Dendritic cell treated with granulocyte-macrophage colony-stimulating factor and Interleukin-4, amounts not matched to agents 40 ng/mL and 50 ng/mL, for 4 days (primary cell): ENCODE measurements at regions of chr20 and their contacts with region 1.

Region 1: GRCh38 chr20:8131598-8132483 is at the start of gene PLCB1:
- H3K4me3 Mint-ChIP-seq: peak within 1 kb of the TSS; percentile 79
- H3K27ac Mint-ChIP-seq: peak within 1 kb of the TSS; percentile 23
- H3K4me1 Mint-ChIP-seq: peaks cover 40% of the 10 kb centered on the region
- H3K27me3 Mint-ChIP-seq: peaks cover 20% of the 10 kb centered on the region

Region 2: DNA sequence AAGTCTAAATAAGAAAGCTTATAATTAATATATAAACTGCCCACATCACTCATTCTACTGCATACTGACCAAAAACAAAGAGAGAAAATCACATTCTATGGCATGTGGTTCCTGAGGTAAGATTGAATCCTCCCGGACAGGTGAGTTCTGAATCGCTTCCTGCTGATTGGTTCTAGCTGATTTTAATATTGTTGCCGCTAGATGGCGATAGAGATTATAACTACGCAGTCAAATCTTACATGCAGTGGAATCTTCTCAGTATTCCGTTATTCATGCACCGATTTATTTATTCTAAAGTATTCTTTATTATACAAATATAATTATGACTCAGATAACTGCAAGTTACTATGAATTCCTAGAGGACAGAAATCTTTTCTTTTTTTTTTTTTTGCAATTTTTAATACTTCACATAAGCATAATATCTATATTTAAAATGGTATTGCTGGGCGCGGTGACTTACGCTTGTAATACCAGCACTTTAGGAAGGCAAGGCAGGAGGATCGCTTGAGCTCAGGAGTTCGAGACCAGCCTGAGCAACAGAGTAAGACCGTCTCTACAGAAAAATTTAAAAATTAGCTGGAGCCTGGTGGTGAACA is 88.1 kb before region 1 on chr20:
- intact Hi-C with region 1: loop called (anchors 5 kb)
- H3K4me3 Mint-ChIP-seq: no peak overlapping the region
- H3K27ac Mint-ChIP-seq: no peak overlapping the region
- H3K4me1 Mint-ChIP-seq: no peaks in the 10 kb centered on the region
- H3K27me3 Mint-ChIP-seq: no peaks in the 10 kb centered on the region

Region 3: GRCh38 chr20:8161264-8162071 is 29.6 kb after region 1 on chr20:
- intact Hi-C with region 1: no loop called
- H3K4me3 Mint-ChIP-seq: no peak overlapping the region
- H3K27ac Mint-ChIP-seq: no peak overlapping the region
- H3K4me1 Mint-ChIP-seq: peaks cover 12% of the 10 kb centered on the region
- H3K27me3 Mint-ChIP-seq: no peaks in the 10 kb centered on the region

Region 4: DNA sequence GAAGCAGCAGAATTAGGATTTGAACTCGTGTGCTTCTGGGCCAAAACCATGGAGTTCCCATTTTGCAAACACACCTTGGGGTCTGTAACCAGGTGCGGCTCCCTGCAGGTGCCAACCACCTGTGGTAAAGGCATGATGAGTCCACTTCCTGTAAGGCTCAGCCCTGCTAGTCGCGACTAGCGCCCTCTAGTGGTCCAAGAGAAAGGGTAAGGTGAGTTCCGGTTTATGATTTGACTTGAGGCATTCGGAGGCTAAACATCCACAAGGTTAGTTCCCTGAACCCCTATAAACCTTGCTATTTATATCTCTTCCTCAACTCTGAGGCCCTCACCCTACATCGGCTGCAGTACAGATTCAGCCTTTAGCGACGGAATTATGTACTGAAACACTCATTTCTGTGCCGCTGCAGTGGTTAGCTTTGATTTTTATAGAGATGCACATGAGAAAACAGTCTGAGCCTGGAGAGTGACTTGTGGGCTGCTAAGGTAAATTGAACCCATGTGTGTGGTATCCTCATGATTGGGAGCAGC is 173.7 kb after region 1 on chr20:
- intact Hi-C with region 1: loop called (anchors 1 kb)
- H3K4me3 Mint-ChIP-seq: no peak overlapping the region
- H3K27ac Mint-ChIP-seq: no peak overlapping the region
- H3K4me1 Mint-ChIP-seq: no peaks in the 10 kb centered on the region
- H3K27me3 Mint-ChIP-seq: no peaks in the 10 kb centered on the region

Region 5: GRCh38 chr20:8389381-8390036 is 257.7 kb after region 1 on chr20:
- intact Hi-C with region 1: loop called (anchors 2 kb)
- H3K4me3 Mint-ChIP-seq: no peak overlapping the region
- H3K27ac Mint-ChIP-seq: no peak overlapping the region
- H3K4me1 Mint-ChIP-seq: peaks cover 5% of the 10 kb centered on the region
- H3K27me3 Mint-ChIP-seq: no peaks in the 10 kb centered on the region

Region 6: GRCh38 chr20:8527998-8528723 is 396.3 kb after region 1 on chr20:
- intact Hi-C with region 1: loop called (anchors 5 kb)
- H3K4me3 Mint-ChIP-seq: no peak overlapping the region
- H3K27ac Mint-ChIP-seq: no peak overlapping the region
- H3K4me1 Mint-ChIP-seq: peaks cover 11% of the 10 kb centered on the region
- H3K27me3 Mint-ChIP-seq: no peaks in the 10 kb centered on the region

Region 7: GRCh38 chr20:8722276-8722928 is 590.6 kb after region 1 on chr20:
- intact Hi-C with region 1: loop called (anchors 1 kb)
- H3K4me3 Mint-ChIP-seq: no peak overlapping the region
- H3K27ac Mint-ChIP-seq: no peak overlapping the region
- H3K4me1 Mint-ChIP-seq: no peaks in the 10 kb centered on the region
- H3K27me3 Mint-ChIP-seq: no peaks in the 10 kb centered on the region